ENCODE measurements at regions of chr13 and their contacts with region 1.

Region 1: GRCh38 chr13:37049810-37050209 is 9.7 kb downstream of the SUPT20H start:
- H3K4me3 Mint-ChIP-seq: no peak overlapping the region
- H3K27ac Mint-ChIP-seq: no peak overlapping the region
- H3K4me1 Mint-ChIP-seq: peaks cover 10% of the 10 kb centered on the region
- H3K27me3 Mint-ChIP-seq: no peaks in the 10 kb centered on the region

Region 2: GRCh38 chr13:35909837-35910540 is 1139.8 kb before region 1 on chr13:
- intact Hi-C with region 1: no loop called
- H3K4me3 Mint-ChIP-seq: no peak overlapping the region
- H3K27ac Mint-ChIP-seq: no peak overlapping the region
- H3K4me1 Mint-ChIP-seq: no peaks in the 10 kb centered on the region
- H3K27me3 Mint-ChIP-seq: no peaks in the 10 kb centered on the region

Region 3: DNA sequence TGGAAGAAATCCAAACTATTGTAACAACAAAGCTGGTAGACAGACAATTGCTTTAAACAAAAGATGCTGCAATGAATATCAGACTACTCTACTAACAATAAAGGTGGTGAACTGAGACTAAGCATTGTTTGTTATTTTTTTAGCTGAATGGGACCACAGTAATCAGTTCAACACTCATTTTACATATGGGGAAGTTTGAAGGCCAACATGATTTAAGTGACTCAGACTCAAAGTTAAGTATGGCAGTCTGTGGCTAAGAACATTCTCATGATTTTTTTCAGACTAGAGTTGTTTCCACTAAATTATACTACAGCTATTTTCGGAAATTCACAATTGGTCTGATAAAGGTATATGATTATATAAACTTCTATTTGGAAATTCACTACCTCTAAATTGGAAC is 38.8 kb before region 1 on chr13:
- intact Hi-C with region 1: loop called (anchors 5 kb)
- H3K4me3 Mint-ChIP-seq: no peak overlapping the region
- H3K27ac Mint-ChIP-seq: no peak overlapping the region
- H3K4me1 Mint-ChIP-seq: peaks cover 4% of the 10 kb centered on the region
- H3K27me3 Mint-ChIP-seq: no peaks in the 10 kb centered on the region

Region 4: GRCh38 chr13:37148501-37148900 is 98.7 kb after region 1 on chr13:
- intact Hi-C with region 1: no loop called
- H3K4me3 Mint-ChIP-seq: no peak overlapping the region
- H3K27ac Mint-ChIP-seq: no peak overlapping the region
- H3K4me1 Mint-ChIP-seq: no peaks in the 10 kb centered on the region
- H3K27me3 Mint-ChIP-seq: no peaks in the 10 kb centered on the region

Measured in dendritic cell treated with granulocyte-macrophage colony-stimulating factor and Interleukin-4, amounts not matched to agents 40 ng/mL and 50 ng/mL, for 4 days (primary cell).